ENCODE measurements at regions of chr4 and their contacts with region 1.

Region 1: DNA sequence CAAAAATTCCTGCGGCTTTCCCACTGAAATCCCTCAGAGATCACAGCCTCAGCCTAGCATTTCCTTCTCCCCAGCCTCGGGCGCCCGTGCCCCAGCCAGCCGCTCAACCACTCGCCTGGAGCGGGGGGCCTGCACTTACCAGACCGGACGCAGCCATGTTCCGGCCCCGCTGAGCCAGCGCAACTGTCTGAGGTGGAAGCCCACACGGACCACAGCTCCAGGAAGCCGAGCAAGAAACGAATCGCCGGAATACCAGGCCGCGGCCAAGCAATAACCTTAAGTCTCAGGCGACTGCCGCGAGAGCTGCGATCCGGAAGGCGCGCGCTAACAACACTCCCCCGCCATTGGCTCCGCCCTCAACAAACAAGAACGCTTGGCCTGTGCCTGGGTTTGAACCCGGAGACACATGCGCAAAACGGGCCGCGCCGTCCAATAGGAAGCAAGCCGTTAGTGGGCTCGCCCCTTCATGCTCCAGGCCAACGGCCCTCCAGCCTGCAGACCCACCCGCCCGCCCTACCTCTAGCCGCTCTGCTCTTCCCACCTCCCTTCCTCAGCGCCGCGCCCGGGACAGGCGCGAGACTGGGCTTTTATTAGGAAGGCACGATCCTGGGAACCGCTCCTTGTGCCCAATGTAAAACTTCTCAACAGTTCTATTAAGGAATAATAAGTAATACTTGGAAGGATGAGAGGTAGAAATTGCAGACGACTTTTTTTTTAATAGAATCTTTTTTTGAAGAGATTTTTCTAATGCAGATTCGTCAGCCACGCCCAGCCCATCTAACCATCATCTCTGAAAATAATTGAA is at the start of gene CENPC:
- DNase-seq: peak; percentile 93
- ATAC-seq: peak; percentile 97 to 98
- H3K4me3 ChIP-seq: peak within 1 kb of the TSS; percentile 76 to 92 (median 80)
- H3K27ac ChIP-seq: peak within 1 kb of the TSS; percentile 85 to 92 (median 90)
- H3K4me1 ChIP-seq: peaks cover 14 to 19% of the 10 kb centered on the region in 2 donors
- H3K27me3 ChIP-seq: no peaks in the 10 kb centered on the region
- CTCF ChIP-seq: no peak
- POLR2A ChIP-seq: peak; percentile 45 to 79
- total RNA-seq, gene CENPC: 2.4 to 10.4 (median 5.2) TPM

Region 2: GRCh38 chr4:67342291-67342690 is 203.1 kb before region 1 on chr4:
- in situ Hi-C with region 1: no loop called
- intact Hi-C with region 1: no loop called
- DNase-seq: no peak
- ATAC-seq: no peak
- H3K4me3 ChIP-seq: no peak overlapping the region
- H3K27ac ChIP-seq: no peak overlapping the region
- H3K4me1 ChIP-seq: no peaks in the 10 kb centered on the region
- H3K27me3 ChIP-seq: no peaks in the 10 kb centered on the region
- CTCF ChIP-seq: no peak
- POLR2A ChIP-seq: no peak

Region 3: DNA sequence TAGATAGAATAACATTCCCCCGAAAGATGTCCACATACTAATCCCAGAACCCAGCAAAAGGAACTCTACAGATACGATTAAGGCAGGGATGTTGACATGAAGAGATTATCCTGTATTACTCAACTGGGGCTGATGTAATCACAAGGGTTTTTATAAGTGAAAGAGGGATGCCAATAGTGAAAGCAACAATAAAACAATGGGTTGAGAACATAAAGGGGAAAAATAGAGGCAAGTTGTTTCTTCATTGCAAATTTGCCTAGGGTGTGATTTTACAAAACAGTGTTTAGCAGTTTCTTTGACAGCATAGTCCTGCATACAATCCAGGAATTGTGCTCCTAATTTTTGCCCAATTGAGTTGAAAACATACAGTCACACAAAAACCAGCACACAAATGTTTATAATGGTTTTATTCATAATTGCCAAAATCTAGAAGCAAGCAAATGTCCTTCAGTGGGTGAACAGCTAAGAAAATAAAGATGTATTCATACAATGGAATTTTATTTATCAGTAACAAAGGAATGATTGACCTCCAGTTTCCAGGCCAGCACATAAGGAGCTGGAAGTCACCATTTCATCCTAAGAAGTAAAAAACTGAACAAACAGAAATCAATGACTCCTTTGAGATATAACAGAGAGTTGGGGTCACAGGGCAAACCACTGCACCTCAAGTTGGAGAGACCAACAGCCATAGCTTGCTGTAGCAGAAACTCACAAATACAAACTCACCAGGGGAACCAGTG is 107.3 kb before region 1 on chr4:
- in situ Hi-C with region 1: no loop called
- intact Hi-C with region 1: no loop called
- DNase-seq: no peak
- ATAC-seq: peak in 1 of 2 donors; percentile 46
- H3K4me3 ChIP-seq: no peak overlapping the region
- H3K27ac ChIP-seq: no peak overlapping the region
- H3K4me1 ChIP-seq: peaks cover 0 to 12% of the 10 kb centered on the region in 2 donors
- H3K27me3 ChIP-seq: no peaks in the 10 kb centered on the region
- CTCF ChIP-seq: no peak
- POLR2A ChIP-seq: no peak

Region 4: GRCh38 chr4:67624939-67625338 is 79.5 kb after region 1 on chr4:
- in situ Hi-C with region 1: no loop called
- intact Hi-C with region 1: loop called (anchors 10 kb)
- DNase-seq: no peak
- ATAC-seq: no peak
- H3K4me3 ChIP-seq: no peak overlapping the region
- H3K27ac ChIP-seq: no peak overlapping the region
- H3K4me1 ChIP-seq: no peaks in the 10 kb centered on the region
- H3K27me3 ChIP-seq: no peaks in the 10 kb centered on the region
- CTCF ChIP-seq: no peak
- POLR2A ChIP-seq: no peak

Region 5: GRCh38 chr4:67700738-67701516 is 155.5 kb after region 1 on chr4 and contains the start of gene UBA6:
- in situ Hi-C with region 1: loop called in 1 of 4 experiments (anchors 10 kb)
- intact Hi-C with region 1: loop called (anchors 2 kb)
- DNase-seq: peak; percentile 90
- ATAC-seq: peak; percentile 96 to 97
- H3K4me3 ChIP-seq: peak within 1 kb of the TSS; percentile 71 to 97 (median 90)
- H3K27ac ChIP-seq: peak within 1 kb of the TSS; percentile 77 to 90 (median 88)
- H3K4me1 ChIP-seq: peaks cover 13 to 23% of the 10 kb centered on the region in 2 donors
- H3K27me3 ChIP-seq: no peaks in the 10 kb centered on the region
- CTCF ChIP-seq: peak in 3 of 5 experiments; percentile 37 to 72 (median 64)
- POLR2A ChIP-seq: peak; percentile 25 to 44
- total RNA-seq, gene UBA6: 38.9 to 103 (median 46.3) TPM

Region 6: DNA sequence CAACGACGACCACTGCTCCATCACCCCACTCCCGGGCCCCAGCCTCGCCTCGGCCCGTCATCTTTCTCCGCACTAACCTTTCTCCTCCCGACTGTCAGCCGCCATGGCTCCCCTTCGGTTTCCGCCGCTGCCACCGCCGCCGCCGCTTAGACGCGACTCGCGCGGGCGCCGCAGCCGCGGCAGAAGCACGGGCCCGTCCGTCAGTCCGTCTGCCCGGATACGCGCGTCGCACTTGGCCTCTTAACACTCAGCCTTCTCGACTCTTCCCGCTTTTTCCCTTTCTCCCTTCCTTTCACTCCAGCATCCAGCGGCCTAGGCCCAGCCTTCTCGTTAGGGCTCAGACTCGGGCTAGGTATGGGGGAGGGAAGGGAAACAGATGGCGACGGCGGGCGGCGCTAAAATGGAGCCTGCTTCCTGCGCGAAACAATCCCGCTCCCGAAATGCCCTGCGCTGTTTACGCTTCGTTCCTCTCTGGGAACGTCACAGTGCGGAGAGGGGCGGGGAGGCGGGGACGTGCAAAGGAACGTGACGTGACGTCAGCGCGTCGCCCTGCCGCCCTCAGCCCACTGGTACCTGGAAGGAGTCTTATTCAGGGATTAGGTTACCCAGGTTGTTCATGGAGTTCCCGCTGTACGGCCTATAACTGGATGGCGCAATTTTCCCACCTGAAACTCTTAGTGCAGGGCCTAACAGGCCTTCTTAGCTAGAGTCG is 804.4 kb after region 1 on chr4 and contains the start of gene YTHDC1:
- in situ Hi-C with region 1: loop called in 2 of 4 experiments (anchors 25 kb)
- intact Hi-C with region 1: no loop called
- DNase-seq: peak; percentile 93 to 94
- ATAC-seq: peak; percentile 95 to 97
- H3K4me3 ChIP-seq: peak within 1 kb of the TSS; percentile 84 to 95 (median 90)
- H3K27ac ChIP-seq: peak within 1 kb of the TSS; percentile 94 to 97 (median 96)
- H3K4me1 ChIP-seq: peaks cover 31 to 36% of the 10 kb centered on the region in 2 donors
- H3K27me3 ChIP-seq: no peaks in the 10 kb centered on the region
- CTCF ChIP-seq: no peak
- POLR2A ChIP-seq: peak; percentile 92 to 97
- total RNA-seq, gene YTHDC1: 28.0 to 73.1 (median 34.9) TPM